ENCODE measurements at regions of chr4 and their contacts with region 1.

Region 1: GRCh38 chr4:87848622-87849351 is 16.0 kb downstream of the MEPE start:
- DNase-seq: peak in 1 of 2 donors; percentile 56
- ATAC-seq: peak; percentile 72 to 92 (median 82)
- H3K4me3 ChIP-seq: peak overlapping the region in 8 of 10 donors; percentile 4 to 41 (median 30)
- H3K27ac ChIP-seq: peak overlapping the region in 2 of 10 donors; percentile 46 to 83
- H3K4me1 ChIP-seq: peaks cover 0 to 55% (median 8%) of the 10 kb centered on the region in 9 donors
- H3K27me3 ChIP-seq: no peaks in the 10 kb centered on the region
- CTCF ChIP-seq: peak; percentile 48 to 77 (median 67)

Region 2: DNA sequence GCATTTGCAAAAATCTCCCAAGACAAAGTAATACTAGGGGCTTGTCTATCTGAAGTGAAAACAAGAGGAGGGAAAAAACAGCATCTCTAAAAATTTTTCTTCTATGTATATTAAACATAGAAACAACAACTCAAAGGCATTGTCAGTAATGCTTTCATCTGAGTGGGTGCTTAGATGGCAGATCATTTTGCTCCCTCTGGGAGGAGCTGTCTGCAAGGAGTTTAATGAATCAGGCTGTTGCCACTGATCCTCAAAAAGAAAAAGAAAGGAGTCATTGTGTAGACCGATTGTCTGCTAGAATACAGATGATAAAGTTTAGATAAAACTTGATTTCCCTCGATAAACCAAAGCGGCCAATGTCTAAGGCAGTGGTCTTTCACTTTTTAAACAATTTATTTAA is 578.6 kb before region 1 on chr4:
- intact Hi-C with region 1: loop called in 2 of 10 experiments (anchors 10 kb)
- DNase-seq: peak in 1 of 2 donors; percentile 12
- ATAC-seq: peak in 1 of 8 donors; percentile 76
- H3K4me3 ChIP-seq: no peak overlapping the region
- H3K27ac ChIP-seq: no peak overlapping the region
- H3K4me1 ChIP-seq: no peaks in the 10 kb centered on the region
- H3K27me3 ChIP-seq: no peaks in the 10 kb centered on the region
- CTCF ChIP-seq: peak; percentile 7 to 75 (median 53)

Region 3: GRCh38 chr4:87363567-87363966 is 485.2 kb before region 1 on chr4:
- intact Hi-C with region 1: loop called in 1 of 10 experiments (anchors 10 kb)
- DNase-seq: no peak
- ATAC-seq: no peak
- H3K4me3 ChIP-seq: no peak overlapping the region
- H3K27ac ChIP-seq: no peak overlapping the region
- H3K4me1 ChIP-seq: peaks cover 0 to 8% (median 0%) of the 10 kb centered on the region in 9 donors
- H3K27me3 ChIP-seq: no peaks in the 10 kb centered on the region
- CTCF ChIP-seq: no peak

Region 4: DNA sequence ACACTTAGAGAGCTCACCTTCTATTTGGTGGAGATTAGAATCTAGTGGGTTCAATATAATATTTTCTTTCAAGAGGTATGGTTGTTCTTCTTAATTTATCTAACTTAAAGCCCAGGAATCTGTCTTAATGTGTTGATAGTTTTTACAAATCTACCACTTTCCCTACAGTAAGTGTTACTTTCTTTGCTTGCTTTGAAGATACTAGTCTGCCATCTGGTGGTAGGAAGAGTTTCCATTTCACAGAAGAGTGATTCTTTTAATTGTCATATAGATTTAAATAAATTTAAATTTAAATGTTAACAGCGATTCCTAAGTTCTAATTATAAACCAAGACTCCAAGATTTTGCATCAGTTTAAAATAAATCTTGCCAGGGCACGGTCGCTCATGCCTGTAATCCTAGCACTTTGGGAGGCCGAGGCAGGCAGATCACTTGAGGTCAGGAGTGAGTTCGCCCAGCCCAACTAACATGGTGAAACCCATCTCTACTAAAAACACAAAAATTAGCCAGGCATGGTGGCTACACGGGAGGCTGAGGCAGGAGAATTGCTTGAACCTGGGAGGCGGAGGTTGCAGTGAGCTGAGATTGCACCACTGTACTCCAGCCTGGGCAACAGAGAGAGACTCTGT is 382.9 kb before region 1 on chr4:
- intact Hi-C with region 1: loop called in 3 of 10 experiments (anchors 10 kb)
- DNase-seq: no peak
- ATAC-seq: peak in 4 of 8 donors; percentile 19 to 64 (median 57)
- H3K4me3 ChIP-seq: no peak overlapping the region
- H3K27ac ChIP-seq: peak overlapping the region in 1 of 10 donors; percentile 29
- H3K4me1 ChIP-seq: peaks cover 0 to 14% (median 0%) of the 10 kb centered on the region in 9 donors
- H3K27me3 ChIP-seq: no peaks in the 10 kb centered on the region
- CTCF ChIP-seq: peak; percentile 37 to 84 (median 72)

Region 5: DNA sequence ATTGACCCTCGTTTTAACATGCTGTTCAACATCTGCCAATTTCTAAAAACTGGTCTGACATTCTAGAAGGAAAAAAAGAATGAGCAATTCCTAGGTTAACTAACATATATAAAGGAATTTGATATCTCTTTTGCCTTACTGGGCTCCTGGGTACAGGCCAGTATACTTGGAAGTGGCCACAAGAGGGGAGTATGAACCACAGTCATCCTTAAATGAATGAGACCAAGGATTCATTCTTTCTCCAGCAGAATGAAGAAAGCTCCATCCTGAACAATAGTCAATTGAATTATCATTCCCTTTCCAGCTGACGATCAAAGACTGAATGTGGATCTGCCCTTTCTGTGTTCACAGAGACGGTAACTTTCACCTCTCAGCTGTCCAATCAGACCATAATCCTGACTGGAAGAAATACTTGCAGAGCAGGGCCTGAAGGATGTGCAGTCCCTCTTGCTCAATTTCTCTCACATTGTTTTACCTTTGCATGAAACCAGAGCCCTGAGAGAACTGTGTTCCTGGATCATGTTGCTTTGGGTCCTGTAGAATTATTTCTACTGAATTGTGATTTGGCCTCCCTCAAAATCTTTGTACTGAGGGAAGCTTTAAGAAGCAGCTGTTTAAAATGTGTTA is 304.8 kb before region 1 on chr4:
- intact Hi-C with region 1: loop called in 7 of 10 experiments (anchors 2 to 10 kb)
- DNase-seq: peak in 1 of 2 donors; percentile 48
- ATAC-seq: peak in 7 of 8 donors; percentile 46 to 77 (median 65)
- H3K4me3 ChIP-seq: no peak overlapping the region
- H3K27ac ChIP-seq: peak overlapping the region in 3 of 10 donors; percentile 15 to 77 (median 20)
- H3K4me1 ChIP-seq: peaks cover 0 to 32% (median 5%) of the 10 kb centered on the region in 9 donors
- H3K27me3 ChIP-seq: no peaks in the 10 kb centered on the region
- CTCF ChIP-seq: peak in 8 of 9 donors; percentile 44 to 83 (median 65)

Region 6: DNA sequence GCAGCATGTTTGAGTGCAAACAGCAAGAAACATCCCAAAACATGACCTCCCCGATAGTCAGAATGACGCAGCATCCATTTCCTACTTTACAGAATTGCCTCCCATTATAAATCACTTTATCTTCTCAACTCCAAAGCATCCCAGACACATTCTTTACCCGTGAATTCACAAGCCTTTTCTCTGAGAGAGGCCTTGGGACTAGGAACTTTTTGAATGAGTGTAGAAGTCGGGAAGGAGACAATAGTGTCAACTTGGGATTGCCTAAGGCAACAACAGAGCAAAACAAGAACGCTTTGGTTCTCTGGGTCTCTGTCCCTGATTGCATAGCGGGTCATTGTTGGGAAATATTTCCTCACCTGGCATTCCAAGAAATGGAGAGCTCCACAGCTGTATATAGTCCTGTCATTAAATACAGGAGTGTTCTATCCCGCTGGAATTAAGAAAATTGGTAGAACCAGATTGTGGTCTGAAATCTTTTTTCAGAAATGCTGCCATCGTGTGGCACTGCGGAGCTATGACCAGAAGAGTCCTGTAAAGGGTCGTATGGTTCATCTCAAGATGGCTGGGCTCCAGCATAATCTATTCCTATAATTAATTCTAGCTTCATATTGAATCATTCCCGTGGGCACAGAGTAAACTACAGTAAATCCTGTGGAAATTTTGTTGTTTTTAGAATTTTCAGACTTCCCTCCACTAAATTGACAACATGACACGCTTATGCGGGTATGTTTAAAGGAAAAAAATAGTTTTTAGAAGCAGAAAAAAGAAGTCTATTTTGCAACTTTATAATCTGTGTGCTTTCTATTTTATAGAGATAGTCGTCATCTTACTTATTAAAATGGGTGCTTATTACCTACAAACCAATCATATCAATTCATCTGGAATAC is 124.7 kb after region 1 on chr4:
- intact Hi-C with region 1: loop called in 9 of 10 experiments (anchors 1 to 2 kb)
- DNase-seq: peak; percentile 43 to 63
- ATAC-seq: peak in 7 of 8 donors; percentile 38 to 79 (median 74)
- H3K4me3 ChIP-seq: peak overlapping the region in 2 of 10 donors; percentile 8 to 12
- H3K27ac ChIP-seq: no peak overlapping the region
- H3K4me1 ChIP-seq: peaks cover 0 to 18% (median 0%) of the 10 kb centered on the region in 9 donors
- H3K27me3 ChIP-seq: peaks cover 0 to 37% (median 4%) of the 10 kb centered on the region in 7 donors
- CTCF ChIP-seq: peak; percentile 58 to 89 (median 84)

Region 7: DNA sequence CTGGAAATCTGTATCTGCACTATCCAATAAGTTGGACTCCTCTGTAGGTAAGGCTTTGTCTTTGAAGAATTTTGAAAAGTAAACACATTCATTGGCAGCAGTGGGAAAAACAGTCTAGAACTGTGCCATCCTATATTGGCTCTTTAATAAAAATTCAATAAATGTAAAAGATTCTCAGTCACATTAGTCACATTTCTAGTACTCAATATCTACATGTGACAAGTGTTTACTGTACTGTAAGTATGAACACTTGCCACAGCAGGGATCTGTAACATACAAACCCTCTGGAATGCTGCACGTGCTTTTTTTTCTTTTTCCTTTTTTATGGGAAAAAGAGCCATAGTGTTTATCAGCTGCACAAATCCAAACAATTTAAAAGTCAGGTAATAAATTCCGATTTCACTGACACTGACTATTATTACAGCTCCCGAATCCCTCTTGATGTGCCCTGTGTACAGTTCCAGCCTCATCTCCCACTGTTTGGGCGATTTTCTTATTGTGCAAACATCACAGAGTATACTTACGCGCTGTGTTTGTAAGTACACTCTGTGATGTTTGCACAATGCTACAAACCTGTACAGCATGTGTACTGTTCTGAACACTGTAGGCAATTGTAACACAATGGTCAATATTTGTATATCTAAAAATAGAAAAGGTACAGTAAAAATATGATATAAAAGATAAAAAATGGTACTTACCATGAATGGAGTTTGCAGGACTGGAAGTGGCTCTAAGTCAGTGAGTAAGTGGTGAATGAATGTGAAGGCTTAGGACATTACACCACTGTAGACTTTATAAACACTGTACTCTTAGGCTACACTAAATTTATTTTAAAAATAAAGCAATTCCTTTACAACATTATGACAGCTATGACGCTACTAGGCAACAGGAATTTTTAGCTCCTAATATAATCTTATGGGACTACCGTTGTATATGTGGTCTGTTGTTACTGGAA is 666.0 kb after region 1 on chr4:
- intact Hi-C with region 1: loop called in 3 of 10 experiments (anchors 5 to 10 kb)
- DNase-seq: no peak
- ATAC-seq: no peak
- H3K4me3 ChIP-seq: no peak overlapping the region
- H3K27ac ChIP-seq: no peak overlapping the region
- H3K4me1 ChIP-seq: peaks cover 0 to 5% (median 0%) of the 10 kb centered on the region in 9 donors
- H3K27me3 ChIP-seq: no peaks in the 10 kb centered on the region
- CTCF ChIP-seq: no peak